ENCODE measurements at regions of chr5 and their contacts with region 1.

Region 1: DNA sequence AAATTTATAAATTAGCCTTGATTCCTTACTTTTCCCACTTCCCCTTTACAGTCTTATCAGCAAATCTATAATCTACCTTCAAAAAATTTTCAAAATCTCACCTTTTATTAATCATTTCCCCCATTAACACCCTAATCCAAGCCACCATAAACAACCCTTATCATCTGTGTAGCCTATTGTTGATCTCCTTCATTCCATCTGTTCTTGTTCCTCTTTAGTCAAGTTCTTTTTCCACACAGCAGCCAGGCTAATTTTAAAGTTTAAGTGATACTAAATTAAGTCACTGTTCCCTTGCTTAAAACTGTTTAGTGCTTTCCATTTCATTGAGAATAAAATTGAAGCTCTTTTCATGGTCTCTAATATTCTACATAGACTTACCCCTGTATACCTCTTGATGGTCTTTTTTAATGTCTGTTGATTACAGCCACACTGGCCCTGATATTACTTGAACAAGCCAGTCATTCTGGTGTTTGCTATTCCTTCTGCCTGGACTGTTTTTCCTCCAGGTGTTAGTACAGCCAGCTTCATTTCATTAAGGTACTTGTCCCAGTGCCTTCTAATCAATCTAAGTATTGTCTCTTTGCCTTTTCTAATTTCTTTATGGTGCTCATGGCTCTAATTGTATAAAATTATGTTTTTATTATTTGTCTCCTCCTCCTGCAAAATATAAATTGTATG is 31.1 kb downstream of the GPR151 start:
- DNase-seq: no peak
- H3K4me3 ChIP-seq: no peak overlapping the region
- H3K27ac ChIP-seq: no peak overlapping the region
- H3K4me1 ChIP-seq: no peaks in the 10 kb centered on the region
- H3K27me3 ChIP-seq: no peaks in the 10 kb centered on the region
- CTCF ChIP-seq: no peak

Region 2: GRCh38 chr5:146151970-146152369 is 332.9 kb before region 1 on chr5:
- CTCF ChIA-PET with region 1: no interaction called
- POLR2A ChIA-PET with region 1: no interaction called
- intact Hi-C with region 1: loop called (anchors 10 kb)
- DNase-seq: peak in 1 of 2 experiments; percentile 46
- H3K4me3 ChIP-seq: no peak overlapping the region
- H3K27ac ChIP-seq: no peak overlapping the region
- H3K4me1 ChIP-seq: no peaks in the 10 kb centered on the region
- H3K27me3 ChIP-seq: no peaks in the 10 kb centered on the region
- CTCF ChIP-seq: no peak

Region 3: DNA sequence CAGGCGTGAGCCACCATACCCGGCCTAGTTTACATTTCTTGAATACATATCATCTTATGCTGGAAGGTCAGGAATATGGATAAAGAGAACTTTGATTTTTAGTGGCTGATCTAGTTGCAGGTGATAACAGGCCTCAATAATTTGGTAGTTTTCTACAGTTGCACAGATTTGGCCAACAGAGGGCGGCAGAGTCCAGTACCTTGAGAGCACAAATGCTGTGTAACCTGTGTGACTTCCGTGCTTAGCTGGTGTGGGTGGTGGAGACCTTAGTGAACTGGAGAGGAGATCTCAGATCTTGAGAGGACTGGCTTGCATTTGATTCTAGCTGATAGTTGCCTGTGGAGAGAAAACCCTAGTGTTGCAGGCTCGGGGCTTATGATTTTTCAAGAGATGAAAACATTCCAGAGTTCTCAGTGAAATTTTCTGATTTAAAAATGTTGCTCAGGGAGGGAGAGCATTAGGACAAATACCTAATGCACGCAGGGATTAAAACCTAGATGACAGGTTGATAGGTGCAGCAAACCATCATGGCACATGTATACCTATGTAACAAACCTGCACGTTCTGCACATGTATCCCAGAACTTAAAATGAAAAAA is 48.5 kb after region 1 on chr5:
- CTCF ChIA-PET with region 1: no interaction called
- POLR2A ChIA-PET with region 1: no interaction called
- intact Hi-C with region 1: no loop called
- DNase-seq: peak; percentile 39 to 65
- H3K4me3 ChIP-seq: no peak overlapping the region
- H3K27ac ChIP-seq: no peak overlapping the region
- H3K4me1 ChIP-seq: no peaks in the 10 kb centered on the region
- H3K27me3 ChIP-seq: peaks cover 4% of the 10 kb centered on the region; the same call in 1 of the 2 replicates
- CTCF ChIP-seq: peak; percentile 88

Region 4: DNA sequence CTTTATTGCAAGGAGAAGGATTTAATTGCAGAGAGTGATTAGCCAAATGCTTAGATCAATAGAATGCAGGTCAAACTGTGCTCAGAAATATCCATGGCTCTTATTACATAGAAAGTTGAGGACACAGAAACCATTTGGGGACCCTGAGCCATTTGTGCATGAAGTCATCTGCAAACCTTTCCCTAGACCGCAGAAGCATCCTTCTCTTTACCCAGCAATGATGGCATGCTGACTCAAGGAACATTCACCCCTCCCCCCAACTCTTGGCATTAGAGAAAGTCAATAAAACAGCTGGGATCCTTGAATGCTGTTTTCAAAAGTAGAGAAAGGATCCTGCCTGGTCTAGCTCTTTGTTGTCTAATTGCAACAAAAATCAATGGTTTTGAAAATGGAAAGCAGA is 320.2 kb after region 1 on chr5:
- CTCF ChIA-PET with region 1: no interaction called
- POLR2A ChIA-PET with region 1: no interaction called
- intact Hi-C with region 1: no loop called
- DNase-seq: no peak
- H3K4me3 ChIP-seq: no peak overlapping the region
- H3K27ac ChIP-seq: no peak overlapping the region
- H3K4me1 ChIP-seq: no peaks in the 10 kb centered on the region
- H3K27me3 ChIP-seq: peaks cover 36% of the 10 kb centered on the region
- CTCF ChIP-seq: no peak

Region 5: GRCh38 chr5:148397968-148398597 is 1913.2 kb after region 1 on chr5:
- CTCF ChIA-PET with region 1: no interaction called
- POLR2A ChIA-PET with region 1: no interaction called
- intact Hi-C with region 1: loop called (anchors 10 kb)
- DNase-seq: peak; percentile 16 to 85
- H3K4me3 ChIP-seq: peak overlapping the region; percentile 30; the same call in 1 of the 2 replicates
- H3K27ac ChIP-seq: peak overlapping the region; percentile 88
- H3K4me1 ChIP-seq: peaks cover 47% of the 10 kb centered on the region
- H3K27me3 ChIP-seq: no peaks in the 10 kb centered on the region
- CTCF ChIP-seq: no peak